ENCODE measurements at regions of chr1 and their contacts with region 1.

Region 1: DNA sequence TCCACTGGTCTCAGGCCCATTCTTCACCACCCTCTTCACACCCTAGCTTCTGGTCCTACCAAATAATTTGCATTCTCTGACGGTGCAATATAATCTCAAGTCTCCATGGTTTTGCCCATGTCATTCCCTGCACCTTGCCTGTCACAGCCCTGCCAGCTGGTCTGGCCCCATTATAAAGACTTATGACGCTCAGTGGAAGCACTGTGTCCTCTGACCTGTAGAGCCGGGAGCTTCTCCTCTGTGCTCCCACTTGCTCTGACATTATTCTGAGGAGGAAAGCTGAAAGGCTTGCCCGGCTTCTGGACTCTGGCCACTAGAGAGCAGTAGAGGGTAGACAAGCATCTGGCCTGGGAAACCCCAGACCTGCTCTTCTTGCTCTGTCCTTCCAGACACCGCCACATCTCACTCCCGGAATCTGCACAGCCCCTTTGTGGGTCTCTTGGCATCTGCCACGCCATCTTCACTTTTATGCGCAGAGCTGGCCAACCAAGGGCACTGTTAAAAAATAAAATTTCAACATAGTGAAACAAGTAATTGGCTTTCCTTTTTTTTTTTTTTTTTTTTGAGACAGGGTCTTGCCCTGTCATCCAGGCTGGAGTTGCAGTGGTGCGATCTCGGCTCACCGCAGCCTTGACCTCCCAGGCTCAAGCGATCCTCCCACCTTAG is 44.4 kb downstream of the NENF start:
- DNase-seq: peak; percentile 93
- H3K4me3 Mint-ChIP-seq: no peak overlapping the region
- H3K27ac Mint-ChIP-seq: peak overlapping the region; percentile 2
- H3K4me1 Mint-ChIP-seq: peaks cover 13% of the 10 kb centered on the region
- H3K27me3 Mint-ChIP-seq: peaks cover 26% of the 10 kb centered on the region

Region 2: GRCh38 chr1:212291505-212292134 is 185.5 kb before region 1 on chr1:
- intact Hi-C with region 1: no loop called
- DNase-seq: peak; percentile 66
- H3K4me3 Mint-ChIP-seq: peak overlapping the region; percentile 39
- H3K27ac Mint-ChIP-seq: peak overlapping the region; percentile 76
- H3K4me1 Mint-ChIP-seq: peaks cover 69% of the 10 kb centered on the region
- H3K27me3 Mint-ChIP-seq: no peaks in the 10 kb centered on the region

Region 3: DNA sequence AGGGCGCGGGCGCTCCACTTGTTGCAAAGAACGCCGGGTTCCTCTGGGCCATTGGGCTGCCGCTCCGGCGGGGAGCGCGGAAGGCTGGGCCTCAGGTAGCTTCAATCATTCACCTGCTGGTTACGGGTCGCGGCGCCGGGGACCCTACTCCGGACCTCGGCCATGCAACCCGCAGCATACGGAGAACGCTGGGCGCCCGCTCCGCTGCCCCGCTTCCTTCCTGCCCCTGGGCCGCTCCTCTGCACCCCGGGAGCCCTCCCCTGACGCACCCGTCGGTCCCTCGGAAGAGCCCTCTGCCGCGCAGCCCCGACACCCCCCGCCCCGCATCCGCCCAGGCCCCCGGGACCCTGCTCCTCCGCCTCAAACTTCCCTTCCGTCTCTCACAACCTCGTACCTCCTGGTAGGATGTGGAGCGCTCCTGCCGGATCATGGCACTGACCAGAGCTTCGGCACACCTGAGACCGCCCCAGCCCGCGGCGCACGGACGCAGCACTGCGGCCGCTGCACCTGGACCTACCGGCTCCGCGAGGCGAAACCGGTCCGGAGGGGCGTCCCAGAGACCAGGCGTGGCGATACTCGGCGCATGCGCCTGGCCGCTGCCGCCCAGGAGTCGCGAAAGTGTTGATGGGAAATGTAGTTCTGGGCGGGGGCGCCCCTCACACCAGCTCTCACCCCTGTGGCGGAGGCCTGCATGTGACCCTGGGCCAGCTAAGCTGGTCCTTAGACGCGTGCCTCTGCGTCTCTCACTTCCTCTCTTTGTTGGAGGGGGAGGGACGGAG is 62.6 kb before region 1 on chr1 and contains the start of gene PACC1:
- intact Hi-C with region 1: no loop called
- DNase-seq: peak; percentile 97
- H3K4me3 Mint-ChIP-seq: peak within 1 kb of the TSS; percentile 99
- H3K27ac Mint-ChIP-seq: peak within 1 kb of the TSS; percentile 96
- H3K4me1 Mint-ChIP-seq: peaks cover 25% of the 10 kb centered on the region
- H3K27me3 Mint-ChIP-seq: no peaks in the 10 kb centered on the region
- total RNA-seq, gene PACC1: 16.0 and 19.4 TPM in 2 replicates

Region 4: GRCh38 chr1:212525479-212526110 is 48.4 kb after region 1 on chr1:
- intact Hi-C with region 1: no loop called
- DNase-seq: no peak
- H3K4me3 Mint-ChIP-seq: no peak overlapping the region
- H3K27ac Mint-ChIP-seq: no peak overlapping the region
- H3K4me1 Mint-ChIP-seq: no peaks in the 10 kb centered on the region
- H3K27me3 Mint-ChIP-seq: peaks cover 34% of the 10 kb centered on the region

Region 5: DNA sequence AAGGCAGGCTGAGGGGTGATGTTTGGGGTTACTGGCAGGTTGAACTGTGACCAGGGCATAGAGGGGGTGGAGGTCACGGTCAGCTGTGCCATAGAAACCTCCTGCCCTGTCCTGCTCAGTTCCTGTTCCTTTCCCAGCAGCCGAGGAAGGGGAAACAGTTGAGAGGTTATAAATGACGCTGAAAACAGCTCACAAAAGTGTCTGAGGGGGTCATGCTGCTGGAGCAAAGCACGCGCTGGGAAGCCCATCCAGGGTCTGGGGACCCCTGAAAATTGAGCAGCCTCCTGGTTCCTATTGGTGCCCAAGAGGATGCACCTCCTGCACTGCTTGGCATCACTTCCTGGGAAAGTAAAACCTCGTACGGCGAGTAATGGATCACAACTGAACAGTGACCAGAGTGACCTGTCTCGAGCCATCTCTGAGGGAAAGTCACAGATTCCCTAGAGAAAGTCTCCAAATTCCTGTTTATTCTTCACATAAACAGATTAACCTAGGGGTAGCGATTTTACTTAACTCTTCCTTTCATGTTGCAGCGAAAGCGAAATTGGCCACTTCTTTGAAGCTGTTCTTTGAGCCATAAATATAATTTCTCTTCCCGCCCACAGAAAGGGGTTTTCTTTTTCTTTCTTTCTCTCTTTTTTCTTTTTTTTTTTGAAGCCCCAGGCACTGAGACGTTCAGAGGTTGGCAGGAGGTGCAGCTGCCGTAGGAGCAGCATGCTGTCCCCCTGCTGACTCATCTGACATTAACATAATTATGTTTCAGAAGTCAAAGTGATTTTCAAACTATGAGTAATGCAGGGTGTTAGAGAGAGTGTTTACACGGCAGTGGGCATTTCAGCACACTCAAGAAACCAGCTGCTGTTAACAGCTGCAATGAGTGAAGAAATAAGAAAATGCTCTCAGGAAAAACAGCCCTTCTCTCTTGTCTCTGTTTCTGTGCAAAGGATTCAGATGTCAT is 89.7 kb after region 1 on chr1:
- intact Hi-C with region 1: loop called (anchors 5 kb)
- DNase-seq: peak; percentile 86
- H3K4me3 Mint-ChIP-seq: peak overlapping the region; percentile 81
- H3K27ac Mint-ChIP-seq: peak overlapping the region; percentile 89
- H3K4me1 Mint-ChIP-seq: peaks cover 27% of the 10 kb centered on the region
- H3K27me3 Mint-ChIP-seq: peaks cover 35% of the 10 kb centered on the region

Region 6: DNA sequence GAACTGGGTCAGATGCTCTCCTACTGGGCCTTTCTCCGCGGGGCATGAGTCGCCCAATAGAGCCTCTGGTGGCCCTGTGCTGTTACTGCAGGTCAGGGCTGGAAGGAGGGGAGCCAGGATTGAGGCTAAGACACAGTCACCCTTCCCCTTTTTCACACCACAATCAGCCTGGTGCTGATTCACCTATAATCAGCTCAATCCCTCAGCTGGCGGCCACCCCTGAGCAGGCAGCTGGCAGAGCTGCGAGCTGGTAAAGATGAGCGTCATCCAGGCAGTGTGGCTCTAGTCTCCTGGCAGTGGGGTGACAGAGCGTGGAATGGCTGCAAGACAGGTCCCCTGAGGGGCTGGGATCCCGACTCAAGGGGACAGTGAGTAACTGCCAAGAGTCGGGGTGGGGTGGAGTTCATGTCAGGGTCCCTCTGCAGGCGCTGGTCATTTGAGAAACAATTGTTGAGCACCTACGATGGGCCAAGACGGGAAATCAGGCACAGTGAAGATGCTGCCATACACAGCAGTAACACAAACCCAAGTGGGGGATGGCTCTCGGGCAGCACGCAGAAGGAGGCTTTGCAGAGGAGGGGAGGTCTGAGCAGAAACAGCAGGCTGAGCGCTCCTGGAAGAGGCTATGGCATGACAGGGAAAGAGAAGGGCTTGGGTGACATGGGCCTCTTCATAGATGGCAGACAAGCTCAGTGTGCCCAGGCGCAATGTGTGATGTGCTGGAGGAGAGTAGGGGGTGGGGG is 153.2 kb after region 1 on chr1:
- intact Hi-C with region 1: loop called (anchors 1 kb)
- DNase-seq: peak; percentile 88
- H3K4me3 Mint-ChIP-seq: no peak overlapping the region
- H3K27ac Mint-ChIP-seq: no peak overlapping the region
- H3K4me1 Mint-ChIP-seq: peaks cover 6% of the 10 kb centered on the region
- H3K27me3 Mint-ChIP-seq: peaks cover 10% of the 10 kb centered on the region

Region 7: DNA sequence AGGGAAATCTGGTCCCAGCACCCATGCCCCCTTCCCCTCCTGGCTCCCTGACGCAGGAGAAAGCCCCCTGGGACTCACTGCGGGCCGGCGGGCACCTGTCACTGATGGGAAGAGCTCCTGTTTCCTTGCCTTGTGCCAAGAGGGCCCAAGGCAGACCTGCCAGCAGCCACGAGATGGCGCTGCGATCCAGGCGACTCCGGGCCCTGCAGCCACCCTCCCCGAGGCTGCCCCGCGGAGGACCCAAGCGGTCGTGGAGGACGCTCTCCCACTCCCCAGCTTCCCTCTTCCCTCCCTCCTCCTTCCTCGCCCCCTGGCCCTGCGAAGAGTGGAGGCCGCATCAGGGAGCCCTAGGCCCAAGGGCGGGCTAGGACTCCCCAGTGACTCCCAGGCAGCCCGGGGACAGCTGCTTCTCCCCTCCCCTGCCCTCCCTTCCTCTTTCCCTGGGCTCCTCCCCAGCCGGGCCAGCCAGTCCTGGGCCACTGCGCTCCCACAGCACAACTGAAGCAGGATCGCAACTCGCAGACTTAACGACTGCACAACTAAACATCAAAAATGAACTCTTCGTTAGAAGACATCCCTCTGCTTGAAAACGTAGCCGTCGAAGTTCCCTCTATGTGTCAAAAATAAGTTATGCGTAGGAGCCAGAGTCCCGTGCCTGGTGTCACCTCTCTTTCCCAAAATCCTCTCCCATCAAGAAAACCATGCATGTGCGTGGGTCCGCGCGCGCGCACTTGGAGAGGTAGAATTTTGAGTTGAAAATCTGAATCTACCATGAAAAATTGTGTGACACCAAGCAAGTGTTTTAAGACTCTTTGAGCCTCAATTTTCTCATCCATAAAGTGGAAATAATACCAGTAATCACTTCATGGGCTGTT is 188.3 kb after region 1 on chr1:
- intact Hi-C with region 1: loop called (anchors 1 kb)
- DNase-seq: peak; percentile 94
- H3K4me3 Mint-ChIP-seq: peak overlapping the region; percentile 76
- H3K27ac Mint-ChIP-seq: peak overlapping the region; percentile 66
- H3K4me1 Mint-ChIP-seq: peaks cover 27% of the 10 kb centered on the region
- H3K27me3 Mint-ChIP-seq: peaks cover 24% of the 10 kb centered on the region

Region 8: DNA sequence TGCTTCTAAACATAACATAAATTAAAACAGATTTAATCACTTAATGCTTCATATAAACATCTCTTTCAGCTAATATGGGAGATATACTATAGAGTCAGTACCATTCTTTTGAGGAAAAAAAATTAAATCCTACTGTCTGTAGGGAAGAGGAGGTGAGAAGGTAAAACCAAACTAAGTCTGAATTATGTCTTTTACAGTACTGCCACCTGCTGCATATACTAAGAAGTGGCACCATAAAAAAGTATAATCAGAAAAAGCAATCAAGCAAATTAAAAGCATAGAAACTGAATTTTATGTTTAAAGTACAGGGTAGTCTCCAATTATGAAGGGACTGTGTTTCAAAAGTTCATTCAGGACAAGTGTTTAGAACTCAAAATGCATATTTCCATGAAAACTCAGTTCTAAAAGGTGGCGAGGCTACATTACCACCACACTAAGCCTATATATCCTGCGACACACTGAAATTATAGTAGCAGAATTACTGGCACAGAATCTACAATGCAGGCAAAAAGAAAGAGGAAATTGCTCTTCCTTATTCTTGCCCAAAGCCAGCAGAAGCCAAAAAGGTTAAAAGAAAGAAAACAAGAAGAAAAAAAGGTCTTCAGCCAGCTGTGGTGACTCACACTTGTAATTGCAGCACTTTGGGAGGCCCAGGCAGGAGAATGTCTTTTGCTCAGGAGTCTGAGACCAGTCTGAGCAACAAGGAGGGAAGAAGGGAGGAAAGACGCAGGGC is 305.4 kb after region 1 on chr1:
- intact Hi-C with region 1: loop called (anchors 1 kb)
- DNase-seq: no peak
- H3K4me3 Mint-ChIP-seq: no peak overlapping the region
- H3K27ac Mint-ChIP-seq: no peak overlapping the region
- H3K4me1 Mint-ChIP-seq: peaks cover 8% of the 10 kb centered on the region
- H3K27me3 Mint-ChIP-seq: no peaks in the 10 kb centered on the region

Region 9: DNA sequence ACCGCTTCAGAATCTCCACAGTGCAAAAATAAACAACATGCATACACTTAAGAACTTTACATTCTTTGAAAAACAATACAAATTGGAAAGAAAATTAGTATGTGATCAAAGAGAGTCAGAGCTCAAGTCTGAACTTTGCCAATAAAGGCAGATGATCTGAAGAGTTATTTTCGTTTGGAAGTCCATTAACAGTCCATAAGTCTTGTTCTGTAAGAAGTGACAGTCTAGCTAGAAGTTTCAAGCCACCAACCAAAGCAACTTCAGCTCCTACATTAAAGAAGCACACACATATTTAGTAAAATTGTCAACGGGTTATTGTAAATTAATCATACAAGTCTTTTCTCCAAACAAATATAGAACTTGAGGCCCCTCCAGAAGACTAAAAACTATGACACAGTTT is 517.8 kb after region 1 on chr1:
- intact Hi-C with region 1: loop called (anchors 2 kb)
- DNase-seq: no peak
- H3K4me3 Mint-ChIP-seq: no peak overlapping the region
- H3K27ac Mint-ChIP-seq: no peak overlapping the region
- H3K4me1 Mint-ChIP-seq: peaks cover 2% of the 10 kb centered on the region
- H3K27me3 Mint-ChIP-seq: no peaks in the 10 kb centered on the region

Measured in activated CD4-positive, alpha-beta T cell treated with anti-CD3 and anti-CD28 coated beads, Interleukin-2, amount 10 ng/mL, durations not matched to agents 24 days and 14 days (primary cell).